Cardiac septum (tissue), 1 donor: ENCODE measurements at regions of chr5 and their contacts with region 1.

Region 1: GRCh38 chr5:110738812-110739651 is at the start of gene SLC25A46:
- DNase-seq: peak; percentile 91
- total RNA-seq, gene SLC25A46: 48.0 TPM

Region 2: GRCh38 chr5:110644357-110644756 is 94.7 kb before region 1 on chr5:
- intact Hi-C with region 1: no loop called
- DNase-seq: no peak

Region 3: GRCh38 chr5:110880413-110880812 is 141.4 kb after region 1 on chr5:
- intact Hi-C with region 1: no loop called
- DNase-seq: no peak

Region 4: DNA sequence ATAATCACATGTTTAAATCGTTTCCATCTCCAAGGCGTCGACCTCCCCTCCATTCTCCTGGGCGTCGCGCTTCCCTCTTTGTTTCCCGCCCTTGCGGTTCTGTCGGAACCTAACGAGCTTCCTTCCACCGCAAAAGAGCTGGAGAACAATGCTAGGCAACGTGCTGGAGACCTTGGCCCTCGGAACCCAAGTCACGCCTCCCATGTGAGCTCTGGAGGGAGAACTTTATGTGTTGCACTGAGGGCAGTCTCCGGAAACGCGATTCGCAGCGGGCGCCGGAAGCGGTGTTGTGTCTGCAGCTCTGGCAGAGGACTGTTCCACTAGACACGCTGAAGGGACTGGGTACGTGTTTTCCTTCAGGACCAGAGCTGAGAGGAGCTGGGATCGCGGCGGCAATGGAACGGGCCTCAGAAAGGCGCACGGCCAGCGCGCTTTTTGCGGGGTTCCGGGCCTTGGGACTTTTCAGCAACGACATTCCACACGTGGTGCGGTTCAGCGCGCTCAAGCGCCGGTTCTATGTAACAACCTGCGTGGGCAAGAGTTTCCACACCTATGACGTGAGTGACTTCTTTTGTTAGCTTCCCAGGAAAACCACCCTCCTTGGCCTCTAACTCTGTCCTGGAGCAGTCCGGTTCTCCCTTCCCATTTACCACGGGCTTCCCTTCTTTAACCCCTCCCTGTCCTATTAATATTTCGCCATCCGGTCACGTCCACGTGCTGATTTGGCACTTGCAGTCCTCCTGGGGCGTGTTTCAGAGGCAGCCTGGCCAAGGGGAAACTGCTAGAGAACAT is 353.2 kb after region 1 on chr5 and contains the start of gene WDR36:
- intact Hi-C with region 1: loop called (anchors 5 kb)
- DNase-seq: peak; percentile 93
- total RNA-seq, gene WDR36: 12.9 TPM